Activated T-helper 2 cell treated with anti-CD3 and anti-CD28 coated beads, Interferon-gamma antibody, Interleukin-2, Interleukin-4, amounts not matched to agents 10 μg/mL and 5 μg/mL and 100 μg/mL, durations not matched to agents 14 hours and 24 hours and 36 hours (primary cell): ENCODE measurements at regions of chr12 and their contacts with region 1.

Region 1: DNA sequence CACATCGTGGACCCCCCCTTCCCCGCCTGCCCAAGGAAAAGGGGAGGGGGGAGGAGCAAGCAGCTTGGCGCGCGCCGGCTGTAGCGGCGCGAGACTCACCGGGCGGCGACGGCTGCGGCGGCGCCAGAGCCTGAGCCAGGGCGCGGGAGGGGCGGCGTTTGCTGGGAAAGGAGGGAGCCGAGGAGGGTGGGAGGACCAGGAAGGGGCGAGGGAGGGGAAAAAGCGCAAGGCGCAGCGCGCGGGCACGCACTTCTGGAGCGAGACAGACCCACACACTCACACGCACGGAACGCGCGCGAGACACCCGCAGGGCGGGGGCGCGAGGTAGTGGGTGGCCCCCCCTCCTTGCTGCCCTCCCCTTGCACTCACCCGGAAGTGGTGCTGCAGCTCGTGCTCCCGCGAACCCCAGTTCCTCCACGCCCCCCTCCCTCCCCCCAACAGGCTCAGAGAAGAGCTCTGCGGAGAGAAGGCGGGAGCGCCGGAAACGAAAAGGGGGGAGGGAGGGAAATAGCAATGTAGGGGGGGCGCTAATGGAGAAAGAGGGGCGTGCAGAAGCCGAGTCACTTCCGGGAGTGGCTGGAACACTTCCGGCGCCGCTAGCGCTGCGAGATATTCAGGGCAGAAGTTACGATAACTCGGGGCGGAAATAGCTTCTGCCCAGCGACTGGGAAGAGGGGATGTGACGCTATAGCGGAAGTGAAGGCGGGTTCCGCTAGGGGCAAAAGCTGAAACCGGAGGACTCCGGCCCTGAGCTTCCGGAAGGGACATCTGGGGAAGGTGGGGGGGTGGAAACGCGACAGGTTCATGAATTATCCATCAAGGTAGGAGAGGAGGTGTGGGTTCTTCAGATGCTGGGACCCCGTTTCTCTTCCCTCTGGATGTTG is at the start of gene ZNF384:
- DNase-seq: peak; percentile 95
- H3K4me3 Mint-ChIP-seq: peak within 1 kb of the TSS; percentile 96
- H3K27ac Mint-ChIP-seq: peak within 1 kb of the TSS; percentile 92
- H3K4me1 Mint-ChIP-seq: peaks cover 35% of the 10 kb centered on the region
- H3K27me3 Mint-ChIP-seq: no peaks in the 10 kb centered on the region
- total RNA-seq, gene ZNF384: 73.7 and 75.4 TPM in 2 replicates

Region 2: DNA sequence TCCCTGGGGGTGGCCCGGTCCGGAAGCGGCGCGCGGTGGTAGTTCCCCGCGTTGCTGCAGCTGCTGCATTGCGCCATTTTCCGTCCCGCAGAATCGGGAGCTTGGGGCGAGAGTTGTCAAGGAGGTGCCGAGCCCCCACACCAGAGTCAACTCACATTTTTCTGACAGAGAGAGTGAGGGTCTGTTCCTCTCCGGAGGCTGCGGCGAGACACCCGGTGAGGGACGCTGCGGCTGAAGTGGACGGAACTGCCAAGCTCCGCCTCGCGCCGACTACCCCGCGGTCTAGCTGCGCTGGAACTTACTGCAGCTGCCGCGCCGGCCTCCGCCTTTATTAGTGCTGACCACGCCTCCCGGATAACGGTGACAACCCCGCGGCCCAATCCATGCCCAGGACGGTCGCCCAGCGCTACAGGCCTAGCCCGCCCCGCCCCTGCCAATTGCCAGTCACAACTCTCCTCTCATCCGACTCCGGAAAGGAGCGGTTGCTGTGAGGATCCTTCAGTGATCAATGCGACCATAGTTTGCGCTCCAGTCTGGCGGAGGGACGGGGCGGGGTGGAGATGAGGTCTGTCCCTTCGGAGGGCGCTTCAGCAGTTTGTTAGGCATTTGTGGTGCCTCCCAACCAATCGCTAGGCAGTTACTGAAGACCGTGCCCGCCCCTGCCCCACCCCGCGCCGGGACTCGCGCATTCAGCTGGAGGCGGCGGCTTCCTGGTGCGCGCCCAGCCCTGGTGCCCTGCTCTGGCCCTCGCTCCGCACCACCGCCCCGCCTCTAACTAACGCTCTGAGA is 218.7 kb before region 1 on chr12 and contains the start of gene VAMP1:
- intact Hi-C with region 1: loop called (anchors 10 kb)
- DNase-seq: peak; percentile 98
- H3K4me3 Mint-ChIP-seq: peak within 1 kb of the TSS; percentile 88
- H3K27ac Mint-ChIP-seq: peak within 1 kb of the TSS; percentile 86
- H3K4me1 Mint-ChIP-seq: peaks cover 47% of the 10 kb centered on the region
- H3K27me3 Mint-ChIP-seq: no peaks in the 10 kb centered on the region
- total RNA-seq, gene VAMP1: 38.7 and 40.7 TPM in 2 replicates

Region 3: GRCh38 chr12:6607751-6608591 is 81.3 kb before region 1 on chr12:
- intact Hi-C with region 1: loop called (anchors 2 kb)
- DNase-seq: peak; percentile 69
- H3K4me3 Mint-ChIP-seq: no peak overlapping the region
- H3K27ac Mint-ChIP-seq: no peak overlapping the region
- H3K4me1 Mint-ChIP-seq: peaks cover 45% of the 10 kb centered on the region
- H3K27me3 Mint-ChIP-seq: no peaks in the 10 kb centered on the region

Region 4: GRCh38 chr12:6647083-6647604 is 42.1 kb before region 1 on chr12 and contains the start of gene ACRBP:
- intact Hi-C with region 1: no loop called
- DNase-seq: peak; percentile 20
- H3K4me3 Mint-ChIP-seq: peak within 1 kb of the TSS; percentile 52
- H3K27ac Mint-ChIP-seq: peak within 1 kb of the TSS; percentile 36
- H3K4me1 Mint-ChIP-seq: no peaks in the 10 kb centered on the region
- H3K27me3 Mint-ChIP-seq: peaks cover 6% of the 10 kb centered on the region
- total RNA-seq, gene ACRBP: 1.2 and 1.5 TPM in 2 replicates

Region 5: GRCh38 chr12:6662906-6663742 is 26.1 kb before region 1 on chr12 and contains the start of gene ING4:
- intact Hi-C with region 1: loop called (anchors 1 kb)
- DNase-seq: peak; percentile 96
- H3K4me3 Mint-ChIP-seq: peak within 1 kb of the TSS; percentile 89
- H3K27ac Mint-ChIP-seq: peak within 1 kb of the TSS; percentile 91
- H3K4me1 Mint-ChIP-seq: peaks cover 17% of the 10 kb centered on the region
- H3K27me3 Mint-ChIP-seq: no peaks in the 10 kb centered on the region
- total RNA-seq, gene ING4: 18.5 and 19.1 TPM in 2 replicates

Region 6: DNA sequence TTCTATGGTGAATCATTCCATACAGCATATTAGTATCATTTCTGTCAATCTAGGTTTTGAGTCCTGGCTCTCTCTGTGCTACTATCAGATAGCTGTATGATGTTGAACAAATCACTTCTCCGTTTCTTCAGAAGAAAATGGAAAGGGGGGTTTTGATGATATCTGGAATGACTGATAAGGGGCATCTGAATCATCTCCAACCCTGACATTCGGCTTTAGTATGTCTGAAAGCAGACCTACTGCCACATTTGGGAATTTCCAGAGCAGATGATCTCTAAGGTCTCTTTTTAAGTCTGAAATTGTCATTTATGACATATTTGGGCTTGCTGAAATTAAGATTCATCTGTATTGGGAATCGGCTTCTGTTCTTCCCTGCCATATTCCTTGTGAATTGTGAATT is 53.6 kb after region 1 on chr12:
- intact Hi-C with region 1: no loop called
- DNase-seq: no peak
- H3K4me3 Mint-ChIP-seq: peak overlapping the region; percentile 8
- H3K27ac Mint-ChIP-seq: peak overlapping the region; percentile 90
- H3K4me1 Mint-ChIP-seq: peaks cover 30% of the 10 kb centered on the region
- H3K27me3 Mint-ChIP-seq: no peaks in the 10 kb centered on the region

Region 7: GRCh38 chr12:6752921-6753771 is 63.9 kb after region 1 on chr12 and contains the start of gene MLF2:
- intact Hi-C with region 1: loop called (anchors 2 kb)
- DNase-seq: peak; percentile 97
- H3K4me3 Mint-ChIP-seq: peak within 1 kb of the TSS; percentile 94
- H3K27ac Mint-ChIP-seq: peak within 1 kb of the TSS; percentile 96
- H3K4me1 Mint-ChIP-seq: peaks cover 32% of the 10 kb centered on the region
- H3K27me3 Mint-ChIP-seq: no peaks in the 10 kb centered on the region
- total RNA-seq, gene MLF2: 162 and 172 TPM in 2 replicates